HepG2 (cell line): ENCODE measurements at regions of chr6 and their contacts with region 1.

Region 1: DNA sequence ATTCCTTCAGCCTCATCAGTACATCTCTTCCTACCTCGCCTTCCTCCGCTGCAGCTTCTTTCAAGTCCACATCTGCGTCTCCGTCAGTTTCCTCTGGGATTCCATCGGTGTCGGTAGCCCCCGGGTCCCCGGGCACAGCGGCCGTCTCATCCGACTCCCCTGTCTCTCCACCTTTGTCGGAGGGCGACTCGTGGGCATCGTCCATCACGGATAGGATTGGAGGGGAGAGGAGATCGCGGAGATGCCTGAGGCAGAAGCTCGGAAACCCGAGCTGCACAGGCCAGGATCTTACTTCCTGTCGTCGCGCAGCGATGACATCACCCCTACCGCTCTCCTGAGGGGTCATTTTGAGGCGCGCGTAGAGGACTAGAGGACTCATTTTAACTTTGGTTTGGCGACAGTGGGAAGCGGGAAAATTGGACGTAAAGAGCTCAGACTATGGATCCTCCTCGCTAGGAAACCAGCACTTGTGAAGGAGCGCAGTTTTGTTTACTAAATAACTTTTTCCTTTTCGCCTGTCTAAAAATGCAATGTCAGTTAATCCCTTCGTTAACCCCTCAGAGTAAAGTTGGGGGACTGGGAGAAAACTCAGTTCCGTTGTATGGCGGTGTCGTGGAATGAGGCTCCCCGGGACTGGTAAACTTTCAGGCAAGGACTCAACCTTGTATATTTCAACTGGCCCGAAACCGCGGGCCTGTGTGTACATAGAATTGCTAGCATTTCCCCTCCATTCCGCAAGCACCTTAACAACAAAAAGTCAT is at the start of gene TAF11:
- DNase-seq: peak; percentile 96
- ATAC-seq: peak; percentile 91
- H3K4me3 ChIP-seq: peak within 1 kb of the TSS; percentile 92 to 97 (median 94)
- H3K27ac ChIP-seq: peak within 1 kb of the TSS; percentile 84
- H3K4me1 ChIP-seq: peaks cover 50% of the 10 kb centered on the region
- H3K27me3 ChIP-seq: no peaks in the 10 kb centered on the region; a peak in 1 of 5 replicates
- CTCF ChIP-seq: peak; percentile 20; the same call in 1 of the 2 replicates
- EP300 ChIP-seq: 0 out of 4 replicates have a peak, but pooled peaks of 1 of the 2 experiments have one; percentile 14
- POLR2A ChIP-seq: peak; percentile 89 to 96
- RAD21 ChIP-seq: peak; percentile 40; the same call in 1 of the 2 replicates
- total RNA-seq, gene TAF11: 73.6 and 94.9 TPM in 2 replicates

Region 2: GRCh38 chr6:34723203-34723602 is 164.7 kb before region 1 on chr6:
- CTCF ChIA-PET with region 1: no interaction called
- POLR2A ChIA-PET with region 1: no interaction called
- in situ Hi-C with region 1: no loop called
- intact Hi-C with region 1: no loop called
- DNase-seq: peak; percentile 55
- ATAC-seq: peak; percentile 47
- H3K4me3 ChIP-seq: no peak overlapping the region; a peak in 1 of 6 replicates
- H3K27ac ChIP-seq: peak overlapping the region; percentile 9
- H3K4me1 ChIP-seq: peaks cover 33% of the 10 kb centered on the region
- H3K27me3 ChIP-seq: no peaks in the 10 kb centered on the region
- CTCF ChIP-seq: no peak
- EP300 ChIP-seq: no peak
- POLR2A ChIP-seq: no peak
- RAD21 ChIP-seq: no peak

Region 3: GRCh38 chr6:34791701-34792235 is 96.2 kb before region 1 on chr6 and contains the start of gene BLTP3A:
- CTCF ChIA-PET with region 1: no interaction called
- POLR2A ChIA-PET with region 1: interaction called, 11 read pairs
- in situ Hi-C with region 1: no loop called
- intact Hi-C with region 1: loop called (anchors 5 kb)
- DNase-seq: peak; percentile 59
- ATAC-seq: peak; percentile 90
- H3K4me3 ChIP-seq: peak within 1 kb of the TSS; percentile 88 to 100 (median 95)
- H3K27ac ChIP-seq: peak within 1 kb of the TSS; percentile 96
- H3K4me1 ChIP-seq: peaks cover 59% of the 10 kb centered on the region
- H3K27me3 ChIP-seq: no peaks in the 10 kb centered on the region; a peak in 1 of 5 replicates
- CTCF ChIP-seq: no peak; the same call in 1 of the 2 replicates
- EP300 ChIP-seq: no peak
- POLR2A ChIP-seq: peak; percentile 76 to 89
- RAD21 ChIP-seq: peak; percentile 57; the same call in 1 of the 2 replicates
- total RNA-seq, gene BLTP3A: 24.0 and 39.3 TPM in 2 replicates

Region 4: GRCh38 chr6:34953061-34954025 is 65.4 kb after region 1 on chr6:
- CTCF ChIA-PET with region 1: no interaction called
- POLR2A ChIA-PET with region 1: interaction called, 10 read pairs
- in situ Hi-C with region 1: no loop called
- intact Hi-C with region 1: loop called (anchors 2 kb)
- DNase-seq: peak; percentile 97
- ATAC-seq: peak; percentile 99
- H3K4me3 ChIP-seq: no peak overlapping the region; a peak in 1 of 6 replicates
- H3K27ac ChIP-seq: peak overlapping the region; percentile 81
- H3K4me1 ChIP-seq: peaks cover 36% of the 10 kb centered on the region
- H3K27me3 ChIP-seq: no peaks in the 10 kb centered on the region
- CTCF ChIP-seq: no peak
- EP300 ChIP-seq: peak; percentile 90
- POLR2A ChIP-seq: peak in 1 of 2 experiments; percentile 45; a peak in 1 of 4 replicates
- RAD21 ChIP-seq: no peak

Region 5: GRCh38 chr6:35195120-35195780 is 307.3 kb after region 1 on chr6:
- CTCF ChIA-PET with region 1: no interaction called
- POLR2A ChIA-PET with region 1: no interaction called
- in situ Hi-C with region 1: no loop called
- intact Hi-C with region 1: no loop called
- DNase-seq: no peak
- ATAC-seq: peak; percentile 24; the same call in 1 of the 3 replicates
- H3K4me3 ChIP-seq: no peak overlapping the region
- H3K27ac ChIP-seq: no peak overlapping the region
- H3K4me1 ChIP-seq: peaks cover 28% of the 10 kb centered on the region
- H3K27me3 ChIP-seq: peaks cover 0 to 13% of the 10 kb centered on the region in 2 experiments; a peak in 2 of 5 replicates
- CTCF ChIP-seq: 0 out of 2 replicates have a peak, but pooled peaks have one; percentile 3
- EP300 ChIP-seq: no peak
- POLR2A ChIP-seq: no peak
- RAD21 ChIP-seq: no peak

Region 6: GRCh38 chr6:35327349-35328027 is 439.6 kb after region 1 on chr6:
- CTCF ChIA-PET with region 1: no interaction called
- POLR2A ChIA-PET with region 1: no interaction called
- in situ Hi-C with region 1: no loop called
- intact Hi-C with region 1: no loop called
- DNase-seq: peak; percentile 71
- ATAC-seq: peak; percentile 91
- H3K4me3 ChIP-seq: no peak overlapping the region
- H3K27ac ChIP-seq: no peak overlapping the region
- H3K4me1 ChIP-seq: peaks cover 45% of the 10 kb centered on the region
- H3K27me3 ChIP-seq: no peaks in the 10 kb centered on the region
- CTCF ChIP-seq: peak; percentile 89
- EP300 ChIP-seq: no peak
- POLR2A ChIP-seq: no peak
- RAD21 ChIP-seq: peak; percentile 81